Aorta (tissue), 5 donors: ENCODE measurements at regions of chr13 and their contacts with region 1.

Region 1: DNA sequence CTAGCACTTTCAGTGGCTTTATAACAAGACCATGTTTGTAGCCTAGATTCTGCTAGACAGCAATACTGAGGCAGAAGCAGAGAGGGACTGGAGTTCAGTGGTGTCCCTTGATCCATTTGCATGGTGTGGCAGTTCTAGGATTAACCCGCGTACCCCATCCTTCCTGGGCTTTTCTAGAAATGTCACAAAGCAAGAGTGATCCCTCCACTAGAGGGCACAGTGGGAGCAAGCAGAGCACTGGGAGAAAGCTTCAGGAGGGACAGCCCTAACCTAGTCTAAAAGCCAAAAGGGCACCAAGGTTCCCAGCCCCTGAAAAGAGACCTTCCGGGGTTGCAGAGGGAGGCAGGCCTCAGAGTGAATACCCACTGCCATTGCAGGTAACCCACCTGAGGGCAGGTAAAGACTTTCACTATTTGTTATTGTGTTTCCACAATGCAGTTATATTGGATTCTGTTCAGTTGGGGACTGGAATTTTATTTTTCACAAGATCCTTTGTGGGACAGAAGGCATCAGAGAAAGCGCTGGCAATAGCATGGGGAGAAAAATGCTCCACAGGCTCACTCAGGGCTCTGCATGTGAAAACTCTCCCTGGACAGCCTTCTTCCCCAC is 170.6 kb downstream of the FLT1 start:
- DNase-seq: peak in 1 of 2 donors; percentile 54
- ATAC-seq: peak; percentile 73
- H3K4me3 ChIP-seq: no peak overlapping the region
- H3K27ac ChIP-seq: no peak overlapping the region
- H3K4me1 ChIP-seq: no peaks in the 10 kb centered on the region
- H3K27me3 ChIP-seq: peaks cover 0 to 2% of the 10 kb centered on the region in 2 donors

Region 2: DNA sequence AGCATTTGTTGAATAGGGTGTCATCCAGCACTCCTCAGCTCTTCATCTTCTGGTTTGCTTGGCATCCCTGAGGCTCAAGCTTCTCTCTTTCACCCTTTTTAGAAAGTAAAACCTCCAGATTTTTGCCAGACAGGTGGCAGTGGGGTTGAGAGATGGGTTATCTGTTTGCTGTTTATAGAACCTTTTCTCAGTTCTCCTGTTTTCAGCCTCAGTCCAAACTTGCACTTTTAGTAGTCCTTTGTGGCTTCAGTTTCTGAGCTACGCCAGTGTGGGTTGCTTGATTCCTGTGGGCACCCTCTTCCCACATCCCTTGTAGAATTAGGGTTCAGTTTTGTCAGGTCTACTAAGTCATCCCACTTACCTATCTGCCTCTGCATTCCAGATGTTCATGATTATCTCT is 38.0 kb before region 1 on chr13:
- intact Hi-C with region 1: no loop called
- DNase-seq: no peak
- ATAC-seq: no peak
- H3K4me3 ChIP-seq: no peak overlapping the region
- H3K27ac ChIP-seq: no peak overlapping the region
- H3K4me1 ChIP-seq: no peaks in the 10 kb centered on the region
- H3K27me3 ChIP-seq: no peaks in the 10 kb centered on the region

Region 3: DNA sequence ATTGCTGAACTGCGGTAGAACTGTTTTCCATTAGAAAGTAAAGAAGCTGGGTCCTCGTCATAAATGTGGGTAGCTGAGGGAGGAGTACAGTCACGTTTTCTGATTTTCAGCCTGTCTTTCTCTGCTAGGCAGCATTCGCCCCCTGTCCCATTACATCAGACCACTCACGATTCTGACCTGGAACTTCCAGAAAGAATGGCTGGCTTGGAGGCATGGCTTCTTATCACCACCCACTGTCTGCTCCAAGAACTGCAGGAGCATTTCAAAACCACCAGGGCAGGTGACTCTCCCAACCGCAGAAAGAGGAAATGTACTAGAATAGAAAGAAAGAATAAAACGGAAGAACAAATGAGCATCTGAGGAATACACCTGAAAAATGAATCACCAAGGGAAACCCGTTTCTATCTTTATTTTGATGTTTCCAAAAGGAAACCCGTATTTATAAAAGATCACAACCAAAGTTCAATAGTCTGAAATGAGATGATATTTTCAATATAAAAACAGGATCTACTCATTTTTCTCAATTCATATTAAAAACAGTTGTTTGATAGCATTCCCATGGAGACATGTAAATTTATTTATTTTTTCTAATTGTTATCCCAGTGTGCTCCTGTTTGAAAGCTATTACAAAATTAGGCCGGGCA is 312.5 kb after region 1 on chr13:
- intact Hi-C with region 1: loop called in 1 of 2 experiments (anchors 2 kb)
- DNase-seq: no peak
- ATAC-seq: peak; percentile 77
- H3K4me3 ChIP-seq: no peak overlapping the region
- H3K27ac ChIP-seq: no peak overlapping the region
- H3K4me1 ChIP-seq: no peaks in the 10 kb centered on the region
- H3K27me3 ChIP-seq: no peaks in the 10 kb centered on the region